HCT116 (cell line): ENCODE measurements at regions of chr6 and their contacts with region 1.

Region 1: GRCh38 chr6:47413752-47414422 is 63.7 kb upstream of the CD2AP start:
- DNase-seq: peak; percentile 41
- ATAC-seq: peak; percentile 91
- H3K4me3 ChIP-seq: peak overlapping the region; percentile 38 to 51
- H3K27ac ChIP-seq: no peak overlapping the region
- H3K4me1 ChIP-seq: peaks cover 8 to 16% of the 10 kb centered on the region in 2 experiments; a peak in 3 of 4 replicates
- H3K27me3 ChIP-seq: no peaks in the 10 kb centered on the region
- CTCF ChIP-seq: peak; percentile 63 to 95 (median 89); a peak in 5 of 6 replicates
- POLR2A ChIP-seq: no peak
- RAD21 ChIP-seq: peak; percentile 91

Region 2: GRCh38 chr6:46312654-46313053 is 1101.2 kb before region 1 on chr6:
- CTCF ChIA-PET with region 1: no interaction called
- POLR2A ChIA-PET with region 1: no interaction called
- RAD21 ChIA-PET with region 1: no interaction called
- intact Hi-C with region 1: no loop called
- DNase-seq: no peak
- ATAC-seq: no peak
- H3K4me3 ChIP-seq: no peak overlapping the region
- H3K27ac ChIP-seq: no peak overlapping the region
- H3K4me1 ChIP-seq: no peaks in the 10 kb centered on the region
- H3K27me3 ChIP-seq: no peaks in the 10 kb centered on the region
- CTCF ChIP-seq: no peak
- POLR2A ChIP-seq: no peak
- RAD21 ChIP-seq: no peak

Region 3: DNA sequence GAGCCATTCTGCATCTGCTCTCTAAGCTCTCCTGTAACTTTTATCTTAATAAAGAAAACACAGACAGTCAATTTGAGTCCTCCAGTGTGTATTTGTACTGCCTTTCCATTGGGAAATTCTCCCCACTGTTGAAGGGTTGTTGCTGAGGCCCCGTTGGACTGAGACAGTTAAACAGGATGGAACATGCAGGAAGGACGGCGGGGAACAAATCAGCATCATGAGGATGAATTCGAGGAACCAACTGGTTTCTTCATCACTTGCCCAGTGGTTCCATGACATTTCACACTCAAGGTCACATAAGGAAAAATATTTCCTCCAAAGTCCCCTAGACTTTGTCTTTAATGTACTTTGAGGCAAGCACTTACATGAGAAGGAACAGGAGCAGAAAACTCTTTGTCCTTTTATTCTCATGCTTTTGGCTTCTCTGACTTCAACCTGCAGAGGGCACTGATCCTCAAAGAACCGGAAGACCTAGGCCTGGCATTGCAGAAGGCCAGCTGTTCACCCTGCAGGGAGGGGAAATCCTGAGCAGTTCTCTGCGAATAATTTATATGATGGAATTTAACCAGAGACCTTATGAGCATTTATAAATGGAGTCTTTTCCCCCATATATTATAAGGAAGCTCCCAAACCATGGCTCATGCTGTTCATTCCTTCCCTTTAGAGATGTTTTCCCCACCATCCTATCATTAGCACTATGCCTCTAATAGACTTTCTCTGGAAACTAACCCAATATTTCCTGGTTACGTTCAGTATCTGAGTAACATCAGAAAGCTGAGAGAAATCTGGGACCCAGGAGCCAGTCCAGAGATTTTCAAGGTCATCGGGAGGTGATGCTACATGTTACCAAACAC is 316.6 kb before region 1 on chr6:
- CTCF ChIA-PET with region 1: no interaction called
- POLR2A ChIA-PET with region 1: no interaction called
- RAD21 ChIA-PET with region 1: no interaction called
- intact Hi-C with region 1: loop called (anchors 5 kb)
- DNase-seq: peak; percentile 73
- ATAC-seq: peak; percentile 88
- H3K4me3 ChIP-seq: no peak overlapping the region
- H3K27ac ChIP-seq: no peak overlapping the region
- H3K4me1 ChIP-seq: peaks cover 8 to 12% of the 10 kb centered on the region in 2 experiments; a peak in 3 of 4 replicates
- H3K27me3 ChIP-seq: no peaks in the 10 kb centered on the region
- CTCF ChIP-seq: peak; percentile 72 to 92 (median 85)
- POLR2A ChIP-seq: no peak
- RAD21 ChIP-seq: peak; percentile 98

Region 4: GRCh38 chr6:47733879-47734558 is 320.1 kb after region 1 on chr6:
- CTCF ChIA-PET with region 1: interaction called, 5 read pairs
- POLR2A ChIA-PET with region 1: no interaction called
- RAD21 ChIA-PET with region 1: no interaction called
- intact Hi-C with region 1: loop called (anchors 1 kb)
- DNase-seq: peak; percentile 26
- ATAC-seq: peak; percentile 69; the same call in 1 of the 2 replicates
- H3K4me3 ChIP-seq: no peak overlapping the region
- H3K27ac ChIP-seq: no peak overlapping the region
- H3K4me1 ChIP-seq: peaks cover 0 to 6% of the 10 kb centered on the region in 2 experiments; a peak in 1 of 4 replicates
- H3K27me3 ChIP-seq: no peaks in the 10 kb centered on the region
- CTCF ChIP-seq: peak; percentile 31 to 68 (median 58); a peak in 4 of 6 replicates
- POLR2A ChIP-seq: no peak
- RAD21 ChIP-seq: peak; percentile 76

Region 5: DNA sequence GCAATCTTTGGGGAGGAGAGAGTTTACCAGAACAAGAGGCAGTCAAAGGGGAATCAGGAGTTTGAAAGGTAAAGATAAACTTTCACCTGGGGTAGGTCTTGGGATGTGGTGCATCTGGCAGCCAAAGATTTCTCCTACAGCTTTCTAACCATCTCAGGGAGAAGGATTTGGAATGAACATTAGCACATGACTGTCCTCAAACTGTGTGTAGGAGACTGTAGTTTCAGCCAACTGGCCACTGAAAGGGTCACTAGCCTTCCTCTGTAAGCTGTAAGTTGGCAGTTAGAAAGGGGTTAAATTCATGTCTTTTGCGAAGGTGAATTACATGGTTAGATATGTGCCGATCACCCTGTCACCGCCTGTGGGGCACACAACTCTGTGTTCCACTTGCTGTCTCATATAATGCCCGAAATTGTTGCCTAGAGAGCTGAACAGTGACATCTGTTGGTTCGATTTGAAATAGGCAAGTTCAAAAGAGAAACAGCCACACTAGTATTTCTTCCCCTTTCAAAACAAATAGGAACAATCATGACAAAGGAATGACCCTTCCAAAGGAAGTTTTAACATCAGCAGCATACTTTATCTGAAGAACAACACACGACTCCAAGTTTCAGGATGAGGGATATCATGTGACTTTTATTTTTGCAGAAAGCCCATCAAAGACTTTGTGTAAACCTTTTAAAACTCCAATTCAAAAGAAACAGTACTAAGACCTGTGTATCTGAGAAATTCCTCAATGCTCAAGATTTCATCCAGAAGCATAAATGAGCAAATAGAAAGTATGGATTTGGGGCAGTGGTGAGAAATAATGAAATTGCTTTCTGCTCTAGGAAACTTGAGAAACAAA is 366.8 kb after region 1 on chr6:
- CTCF ChIA-PET with region 1: interaction called, 12 read pairs
- POLR2A ChIA-PET with region 1: no interaction called
- RAD21 ChIA-PET with region 1: no interaction called
- intact Hi-C with region 1: loop called (anchors 1 kb)
- DNase-seq: peak; percentile 66
- ATAC-seq: peak; percentile 99
- H3K4me3 ChIP-seq: peak overlapping the region in 1 of 2 experiments; percentile 21; a peak in 2 of 4 replicates
- H3K27ac ChIP-seq: no peak overlapping the region
- H3K4me1 ChIP-seq: peaks cover 0 to 13% of the 10 kb centered on the region in 2 experiments; a peak in 1 of 4 replicates
- H3K27me3 ChIP-seq: no peaks in the 10 kb centered on the region
- CTCF ChIP-seq: peak; percentile 63 to 85 (median 84)
- POLR2A ChIP-seq: no peak
- RAD21 ChIP-seq: peak; percentile 84

Region 6: DNA sequence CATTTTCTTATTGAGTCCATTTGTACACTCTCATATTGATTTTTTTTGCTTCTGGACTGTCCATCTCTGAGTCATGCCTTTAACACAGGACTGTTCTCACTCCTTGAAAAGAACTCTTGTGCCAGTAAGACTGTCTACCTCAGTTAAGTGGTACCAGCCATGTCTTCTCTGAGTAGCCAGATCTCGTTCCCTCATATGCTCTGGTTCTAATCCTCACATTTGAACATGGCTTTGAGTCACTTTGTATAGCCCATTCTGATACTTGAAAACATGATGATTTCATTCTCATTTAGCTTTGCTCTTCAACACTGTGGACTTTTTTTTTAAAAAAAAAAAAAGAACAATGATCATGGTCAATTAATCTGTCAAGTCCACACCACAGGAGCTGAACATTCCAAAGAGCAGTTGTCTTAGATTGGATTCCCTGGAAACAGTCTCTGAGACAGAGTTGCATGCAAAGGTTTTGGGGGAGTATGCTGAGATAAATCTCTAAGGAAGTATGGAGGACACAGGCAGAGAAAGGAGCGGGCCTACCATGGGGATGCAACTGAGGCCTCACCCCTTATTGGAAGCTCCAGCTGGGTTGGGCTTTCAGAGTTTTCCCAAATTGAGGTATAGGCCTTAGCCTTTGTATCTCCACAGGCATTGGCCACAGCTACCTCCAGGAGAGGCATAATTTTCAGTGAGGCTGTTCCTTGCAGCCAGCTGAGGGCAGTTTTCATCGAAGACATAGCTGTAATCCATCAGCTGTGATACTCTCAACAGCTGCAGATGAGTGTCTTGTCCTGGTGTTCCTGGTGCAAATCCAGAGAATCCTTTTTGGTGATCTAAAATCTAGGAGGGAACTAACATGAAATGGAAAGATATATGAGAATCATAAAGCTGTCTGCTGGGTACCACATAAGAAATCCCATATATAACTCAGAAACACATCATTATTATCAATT is 703.1 kb after region 1 on chr6:
- CTCF ChIA-PET with region 1: no interaction called
- POLR2A ChIA-PET with region 1: no interaction called
- RAD21 ChIA-PET with region 1: no interaction called
- intact Hi-C with region 1: no loop called
- DNase-seq: no peak
- ATAC-seq: no peak
- H3K4me3 ChIP-seq: no peak overlapping the region
- H3K27ac ChIP-seq: no peak overlapping the region
- H3K4me1 ChIP-seq: no peaks in the 10 kb centered on the region
- H3K27me3 ChIP-seq: no peaks in the 10 kb centered on the region
- CTCF ChIP-seq: no peak
- POLR2A ChIP-seq: no peak
- RAD21 ChIP-seq: no peak